ENCODE measurements at regions of chr14 and their contacts with region 1.

Region 1: DNA sequence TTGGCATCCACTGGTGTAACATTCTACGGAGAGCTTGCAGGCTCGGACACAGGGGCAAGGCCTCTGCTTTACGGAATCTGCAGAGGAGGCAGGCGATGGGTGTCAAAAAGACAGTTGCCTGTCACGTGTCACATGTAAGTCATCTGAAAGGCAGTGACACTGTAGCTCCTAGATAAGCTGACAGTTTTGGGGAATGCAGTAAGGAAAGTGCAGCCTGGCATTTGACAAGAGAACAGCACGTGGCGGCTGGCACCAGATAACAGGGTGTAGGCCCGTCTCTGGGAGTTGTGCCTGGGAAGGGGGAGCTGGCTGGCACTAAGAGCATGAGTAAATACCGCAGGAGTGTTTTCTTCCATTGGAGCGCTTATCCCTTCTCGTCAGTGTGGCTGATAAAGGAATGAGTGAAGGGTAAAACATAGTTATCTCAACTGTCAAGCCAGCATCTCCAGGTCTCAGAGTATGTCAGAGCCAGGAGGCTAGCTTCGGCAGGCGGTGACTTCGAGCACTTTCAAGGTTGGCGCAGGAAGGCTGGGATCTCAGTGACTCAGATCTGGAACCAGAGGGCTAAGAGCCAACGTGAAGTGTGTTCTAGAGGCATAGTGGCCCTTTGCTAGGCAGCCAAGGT is 26.1 kb downstream of the ADCK1 start:
- DNase-seq: no peak
- ATAC-seq: no peak
- H3K4me3 ChIP-seq: no peak overlapping the region
- H3K27ac ChIP-seq: no peak overlapping the region
- H3K4me1 ChIP-seq: no peaks in the 10 kb centered on the region
- H3K27me3 ChIP-seq: no peaks in the 10 kb centered on the region
- CTCF ChIP-seq: no peak
- POLR2A ChIP-seq: no peak

Region 2: GRCh38 chr14:77654001-77654441 is 172.0 kb before region 1 on chr14:
- intact Hi-C with region 1: loop called in 1 of 2 experiments (anchors 10 kb)
- DNase-seq: no peak
- ATAC-seq: no peak
- H3K4me3 ChIP-seq: no peak overlapping the region
- H3K27ac ChIP-seq: no peak overlapping the region
- H3K4me1 ChIP-seq: no peaks in the 10 kb centered on the region
- H3K27me3 ChIP-seq: no peaks in the 10 kb centered on the region
- CTCF ChIP-seq: no peak
- POLR2A ChIP-seq: no peak